PC-9 (cell line): ENCODE measurements at regions of chr2 and their contacts with region 1.

Region 1: GRCh38 chr2:181656450-181657291 is at the start of gene CERKL:
- DNase-seq: peak; percentile 48 to 89
- H3K4me3 ChIP-seq: peak within 1 kb of the TSS; percentile 52
- H3K27ac ChIP-seq: no peak within 1 kb of the TSS
- H3K4me1 ChIP-seq: 0 out of 2 replicates have a peak, but pooled peaks cover 6% of the 10 kb centered on the region
- H3K27me3 ChIP-seq: no peaks in the 10 kb centered on the region
- CTCF ChIP-seq: no peak
- total RNA-seq, gene CERKL: 1.5 and 1.6 TPM in 2 replicates

Region 2: DNA sequence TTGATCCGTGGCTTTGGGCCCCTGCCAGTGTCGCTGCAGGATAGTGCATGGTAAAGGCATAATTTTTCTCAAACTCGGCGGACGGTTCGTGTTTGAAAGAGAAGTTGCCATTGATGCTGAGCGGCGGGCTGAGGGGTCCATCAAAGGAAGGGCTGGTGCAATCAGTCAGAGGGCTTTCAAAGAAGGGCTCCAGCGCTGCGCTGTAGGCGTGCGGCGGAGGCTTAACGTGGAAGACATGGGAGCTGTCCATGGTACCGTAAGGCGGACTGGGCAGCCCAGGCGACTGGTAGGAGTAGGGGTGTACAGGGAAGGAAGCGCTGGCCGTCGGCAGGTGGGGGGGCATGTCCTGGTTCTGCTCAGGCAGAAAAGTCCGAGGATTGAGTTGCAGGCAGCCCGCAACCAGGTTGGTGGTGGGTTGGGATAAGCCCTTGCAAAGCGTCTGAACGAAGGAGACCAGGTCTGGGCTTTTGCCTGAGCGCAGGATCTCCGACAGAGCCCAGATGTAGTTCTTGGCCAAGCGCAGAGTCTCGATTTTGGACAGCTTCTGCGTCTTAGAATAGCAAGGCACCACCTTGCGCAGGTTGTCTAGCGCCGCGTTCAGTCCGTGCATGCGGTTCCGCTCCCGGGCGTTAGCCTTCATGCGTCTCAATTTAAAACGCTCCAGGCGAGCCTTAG is 21.4 kb after region 1 on chr2:
- CTCF ChIA-PET with region 1: no interaction called
- POLR2A ChIA-PET with region 1: no interaction called
- intact Hi-C with region 1: loop called (anchors 2 kb)
- DNase-seq: no peak
- H3K4me3 ChIP-seq: no peak overlapping the region
- H3K27ac ChIP-seq: no peak overlapping the region
- H3K4me1 ChIP-seq: no peaks in the 10 kb centered on the region
- H3K27me3 ChIP-seq: no peaks in the 10 kb centered on the region
- CTCF ChIP-seq: no peak